ENCODE measurements at regions of chr12 and their contacts with region 1.

Region 1: DNA sequence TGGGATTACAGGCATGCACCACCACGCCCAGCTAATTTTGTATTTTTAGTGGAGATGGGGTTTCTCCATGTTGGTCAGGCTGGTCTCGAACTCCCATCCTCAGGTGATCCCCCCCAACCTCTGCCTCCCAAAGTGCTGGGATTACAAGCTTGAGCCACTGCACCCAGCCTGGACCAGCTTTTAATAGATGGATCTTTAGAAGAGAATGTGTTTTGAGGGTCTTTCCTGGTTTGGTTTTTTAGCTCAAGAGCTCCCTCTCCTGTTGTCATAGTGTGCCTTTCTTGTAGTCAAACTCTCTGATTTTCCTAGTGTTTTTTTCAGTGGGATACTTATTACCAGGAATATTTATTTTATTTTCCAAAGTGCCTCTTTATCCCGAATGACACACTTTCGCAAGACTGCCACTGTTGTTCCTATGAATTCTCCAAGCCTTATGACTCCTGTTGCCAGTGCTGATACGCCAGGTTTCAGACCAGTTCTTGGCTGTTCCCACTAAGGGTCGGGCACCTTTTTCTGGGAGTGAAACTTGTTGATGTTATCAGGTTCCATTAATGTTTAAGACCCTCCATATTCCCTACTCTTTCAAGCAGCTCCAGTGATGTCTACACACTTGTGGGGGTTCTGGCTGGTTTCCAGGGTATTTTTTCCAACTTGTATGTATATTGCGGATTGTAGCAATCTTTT is 31.5 kb upstream of the LIMA1 start:
- DNase-seq: peak in 1 of 2 experiments; percentile 17
- H3K4me3 ChIP-seq: no peak overlapping the region
- H3K27ac ChIP-seq: no peak overlapping the region
- H3K4me1 ChIP-seq: peaks cover 11% of the 10 kb centered on the region
- H3K27me3 ChIP-seq: no peaks in the 10 kb centered on the region
- CTCF ChIP-seq: peak; percentile 87

Region 2: DNA sequence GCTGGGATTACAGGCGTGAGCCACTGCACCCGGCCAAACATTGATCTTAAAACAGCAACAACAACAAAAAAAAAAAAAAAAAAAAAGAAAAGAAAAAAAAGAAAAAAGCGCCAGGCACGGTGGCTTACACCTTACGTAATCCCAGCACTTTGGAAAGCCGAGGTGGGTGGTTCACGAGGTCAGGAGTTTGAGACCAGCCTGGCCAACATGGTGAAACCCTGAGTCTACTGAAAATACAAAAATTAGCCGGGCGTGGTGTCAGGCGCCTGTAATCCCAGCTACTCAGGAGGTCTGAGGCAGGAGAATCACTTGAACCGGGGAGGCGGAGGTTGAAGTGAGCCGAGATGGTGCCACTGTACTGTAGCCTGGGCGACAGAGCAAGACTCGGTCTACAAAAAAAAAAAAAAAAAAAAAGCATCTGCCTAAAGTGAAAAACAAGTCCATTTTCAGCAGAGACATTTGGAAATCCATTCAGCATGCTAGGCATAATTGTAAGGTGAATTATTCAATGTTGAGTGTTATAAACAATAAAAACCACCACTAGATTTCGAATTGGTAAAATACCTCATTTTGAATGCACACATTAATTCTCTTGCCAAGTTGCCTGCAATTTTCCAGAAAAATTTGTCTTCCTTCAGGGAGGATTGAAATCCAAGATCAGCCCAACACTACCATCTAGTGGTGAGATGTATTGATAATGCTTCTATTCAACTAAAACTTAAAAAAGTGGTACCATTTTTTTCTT is 139.6 kb before region 1 on chr12:
- CTCF ChIA-PET with region 1: no interaction called
- POLR2A ChIA-PET with region 1: no interaction called
- intact Hi-C with region 1: loop called (anchors 2 kb)
- DNase-seq: peak in 1 of 2 experiments; percentile 51
- H3K4me3 ChIP-seq: no peak overlapping the region
- H3K27ac ChIP-seq: no peak overlapping the region
- H3K4me1 ChIP-seq: no peaks in the 10 kb centered on the region
- H3K27me3 ChIP-seq: no peaks in the 10 kb centered on the region
- CTCF ChIP-seq: peak; percentile 78

Region 3: GRCh38 chr12:50201978-50202521 is 112.7 kb before region 1 on chr12:
- CTCF ChIA-PET with region 1: no interaction called
- POLR2A ChIA-PET with region 1: no interaction called
- intact Hi-C with region 1: loop called (anchors 5 kb)
- DNase-seq: peak; percentile 75 to 96
- H3K4me3 ChIP-seq: peak overlapping the region; percentile 54; the same call in 1 of the 2 replicates
- H3K27ac ChIP-seq: peak overlapping the region; percentile 100
- H3K4me1 ChIP-seq: peaks cover 59% of the 10 kb centered on the region
- H3K27me3 ChIP-seq: no peaks in the 10 kb centered on the region
- CTCF ChIP-seq: no peak

Region 4: GRCh38 chr12:50326636-50327284 is 12.0 kb after region 1 on chr12:
- CTCF ChIA-PET with region 1: no interaction called
- POLR2A ChIA-PET with region 1: no interaction called
- intact Hi-C with region 1: no loop called
- DNase-seq: peak in 1 of 2 experiments; percentile 74
- H3K4me3 ChIP-seq: peak overlapping the region; percentile 6; the same call in 1 of the 2 replicates
- H3K27ac ChIP-seq: peak overlapping the region; percentile 30
- H3K4me1 ChIP-seq: peaks cover 34% of the 10 kb centered on the region
- H3K27me3 ChIP-seq: no peaks in the 10 kb centered on the region
- CTCF ChIP-seq: no peak

Region 5: DNA sequence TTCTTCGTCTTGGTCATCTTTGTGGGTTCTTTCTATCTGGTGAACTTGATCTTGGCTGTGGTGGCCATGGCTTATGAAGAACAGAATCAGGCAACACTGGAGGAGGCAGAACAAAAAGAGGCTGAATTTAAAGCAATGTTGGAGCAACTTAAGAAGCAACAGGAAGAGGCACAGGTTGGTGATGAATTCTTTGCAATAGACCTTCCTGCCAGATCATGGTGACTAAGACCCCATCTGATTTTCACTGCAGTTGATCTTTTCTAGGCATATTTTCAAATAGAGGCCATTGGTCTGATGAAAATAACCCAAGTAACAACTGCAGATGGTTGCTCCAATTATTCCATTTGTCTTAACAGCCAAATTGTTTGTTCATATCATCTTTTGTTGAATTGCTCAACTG is 1390.7 kb after region 1 on chr12:
- CTCF ChIA-PET with region 1: no interaction called
- POLR2A ChIA-PET with region 1: no interaction called
- intact Hi-C with region 1: no loop called
- DNase-seq: no peak
- H3K4me3 ChIP-seq: no peak overlapping the region
- H3K27ac ChIP-seq: no peak overlapping the region
- H3K4me1 ChIP-seq: no peaks in the 10 kb centered on the region
- H3K27me3 ChIP-seq: peaks cover 42% of the 10 kb centered on the region; the same call in 1 of the 2 replicates
- CTCF ChIP-seq: no peak

Measured in PC-9 (cell line).